ENCODE measurements at regions of chr2 and their contacts with region 1.

Region 1: DNA sequence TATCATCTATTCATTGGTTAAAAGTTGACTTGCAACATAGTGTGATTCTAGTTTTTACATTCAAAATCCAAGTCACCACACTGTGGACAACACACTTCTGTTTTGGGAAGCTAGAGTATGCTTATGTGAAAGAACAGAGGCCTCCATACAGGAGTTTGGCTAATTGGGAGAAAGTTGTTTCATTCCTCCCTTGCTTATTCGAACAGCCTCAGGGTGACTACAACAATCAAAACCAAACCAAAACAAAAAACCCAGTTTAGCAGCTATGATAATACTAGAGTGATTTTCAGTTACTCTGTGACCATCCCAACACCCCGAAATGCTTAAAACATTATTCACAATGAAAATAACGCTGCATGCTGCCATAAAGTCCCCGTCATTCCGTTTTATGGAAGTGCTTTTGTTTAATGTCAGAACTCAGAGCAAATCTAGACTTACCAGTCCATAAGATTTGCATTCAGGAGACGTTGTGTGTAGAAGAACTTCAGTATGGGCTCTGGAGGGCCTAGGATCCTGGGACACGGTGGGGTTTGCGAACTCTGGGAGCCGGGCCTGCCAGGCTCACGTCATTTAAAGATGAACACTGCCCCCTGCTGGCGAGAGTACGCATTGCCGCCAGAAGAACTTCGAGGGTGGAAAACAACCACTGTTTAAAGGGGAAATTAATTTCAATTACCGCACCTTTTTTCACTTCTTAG is 111.4 kb downstream of the FTCDNL1 start:
- DNase-seq: peak; percentile 62
- ATAC-seq: peak; percentile 87
- H3K4me3 ChIP-seq: peak overlapping the region in 2 of 3 experiments; percentile 4 to 25; a peak in 1 of 6 replicates
- H3K27ac ChIP-seq: no peak overlapping the region
- H3K4me1 ChIP-seq: peaks cover 46% of the 10 kb centered on the region
- H3K27me3 ChIP-seq: no peaks in the 10 kb centered on the region; a peak in 2 of 5 replicates
- CTCF ChIP-seq: peak; percentile 95
- EP300 ChIP-seq: no peak
- POLR2A ChIP-seq: no peak
- RAD21 ChIP-seq: peak; percentile 92

Region 2: GRCh38 chr2:198309673-198310280 is 1429.8 kb before region 1 on chr2:
- CTCF ChIA-PET with region 1: interaction called, 4 read pairs
- POLR2A ChIA-PET with region 1: no interaction called
- in situ Hi-C with region 1: loop called (anchors 10 kb)
- intact Hi-C with region 1: loop called (anchors 2 kb)
- DNase-seq: peak; percentile 42
- ATAC-seq: peak; percentile 49; the same call in 2 of the 3 replicates
- H3K4me3 ChIP-seq: no peak overlapping the region
- H3K27ac ChIP-seq: no peak overlapping the region
- H3K4me1 ChIP-seq: peaks cover 16% of the 10 kb centered on the region
- H3K27me3 ChIP-seq: peaks cover 2 to 11% of the 10 kb centered on the region in 2 experiments; a peak in 1 of 5 replicates
- CTCF ChIP-seq: peak; percentile 76
- EP300 ChIP-seq: no peak
- POLR2A ChIP-seq: no peak
- RAD21 ChIP-seq: no peak; the same call in 1 of the 2 replicates

Region 3: GRCh38 chr2:199596549-199596948 is 143.0 kb before region 1 on chr2:
- CTCF ChIA-PET with region 1: no interaction called
- POLR2A ChIA-PET with region 1: no interaction called
- in situ Hi-C with region 1: no loop called
- intact Hi-C with region 1: loop called (anchors 10 kb)
- DNase-seq: peak; percentile 41
- ATAC-seq: peak; percentile 82
- H3K4me3 ChIP-seq: no peak overlapping the region
- H3K27ac ChIP-seq: no peak overlapping the region
- H3K4me1 ChIP-seq: 0 out of 2 replicates have a peak, but pooled peaks cover 6% of the 10 kb centered on the region
- H3K27me3 ChIP-seq: no peaks in the 10 kb centered on the region; a peak in 1 of 5 replicates
- CTCF ChIP-seq: peak; percentile 47
- EP300 ChIP-seq: no peak
- POLR2A ChIP-seq: no peak
- RAD21 ChIP-seq: no peak

Region 4: DNA sequence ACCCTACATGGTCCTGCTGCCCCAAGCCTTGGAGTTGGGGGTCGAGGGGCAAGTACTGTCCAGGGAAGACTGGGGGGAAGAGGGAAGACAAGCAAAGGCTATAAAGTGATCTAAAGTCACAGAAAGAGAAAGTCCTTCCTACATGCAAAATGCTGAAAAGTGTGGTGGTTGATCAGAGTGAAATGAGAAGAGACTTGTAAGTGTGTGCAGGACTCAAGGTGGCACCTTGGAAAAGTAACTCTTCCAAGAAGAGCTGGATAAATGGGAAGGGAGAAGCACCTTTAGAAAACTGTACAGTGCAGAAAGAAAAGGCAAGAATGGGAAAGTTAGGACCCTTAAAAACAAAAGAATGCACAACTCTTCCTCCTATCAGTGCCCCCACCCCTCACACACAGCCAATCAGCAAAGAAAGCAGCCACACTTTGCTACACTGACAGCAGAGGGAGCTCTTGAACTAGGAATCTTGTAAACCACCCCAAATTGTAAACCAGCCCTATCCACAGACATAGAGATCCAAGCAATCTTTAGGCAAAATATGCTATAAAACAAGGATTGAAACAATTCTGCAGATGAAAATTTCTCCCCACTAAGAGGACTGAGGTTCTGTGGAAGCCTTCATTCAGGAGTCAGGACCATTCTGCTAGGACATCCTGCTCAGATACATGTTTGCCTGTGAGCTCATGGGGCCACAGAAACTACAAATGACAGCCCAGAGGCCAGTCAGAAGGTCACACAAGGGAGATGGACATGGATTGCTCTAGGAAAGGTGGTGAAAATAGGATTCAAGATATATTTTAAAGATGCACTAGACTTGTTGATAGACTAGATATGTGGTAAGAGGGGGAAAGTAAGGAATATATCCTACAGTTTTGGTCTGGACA is 35.0 kb before region 1 on chr2:
- CTCF ChIA-PET with region 1: interaction called, 111 read pairs
- POLR2A ChIA-PET with region 1: no interaction called
- in situ Hi-C with region 1: loop called (anchors 5 kb)
- intact Hi-C with region 1: loop called (anchors 1 kb)
- DNase-seq: peak; percentile 53
- ATAC-seq: peak; percentile 99
- H3K4me3 ChIP-seq: no peak overlapping the region
- H3K27ac ChIP-seq: no peak overlapping the region
- H3K4me1 ChIP-seq: no peaks in the 10 kb centered on the region
- H3K27me3 ChIP-seq: no peaks in the 10 kb centered on the region
- CTCF ChIP-seq: peak; percentile 90
- EP300 ChIP-seq: no peak
- POLR2A ChIP-seq: no peak
- RAD21 ChIP-seq: peak; percentile 91

Region 5: DNA sequence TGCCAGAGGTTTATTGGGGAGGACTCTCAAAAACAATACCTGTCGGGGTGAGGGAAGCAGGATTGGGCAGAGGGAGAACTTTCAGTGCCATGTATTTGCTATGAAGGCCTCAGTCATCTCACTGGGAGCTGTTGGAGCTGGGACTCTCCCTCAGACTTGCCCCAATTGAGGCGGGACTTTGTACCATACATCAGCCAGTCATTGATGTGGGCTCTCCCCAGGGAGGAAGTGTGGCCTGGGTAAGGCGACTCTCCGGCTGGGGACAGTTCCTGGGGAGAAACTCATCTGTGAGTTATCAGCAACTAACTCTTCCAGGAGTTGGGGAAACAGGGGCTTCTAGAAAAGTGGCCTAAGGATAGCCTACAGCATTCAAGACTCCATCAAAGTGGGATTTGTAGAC is 45.0 kb after region 1 on chr2:
- CTCF ChIA-PET with region 1: no interaction called
- POLR2A ChIA-PET with region 1: no interaction called
- in situ Hi-C with region 1: no loop called
- intact Hi-C with region 1: loop called (anchors 1 kb)
- DNase-seq: no peak
- ATAC-seq: peak; percentile 39; the same call in 1 of the 3 replicates
- H3K4me3 ChIP-seq: no peak overlapping the region
- H3K27ac ChIP-seq: no peak overlapping the region
- H3K4me1 ChIP-seq: no peaks in the 10 kb centered on the region
- H3K27me3 ChIP-seq: no peaks in the 10 kb centered on the region; a peak in 1 of 5 replicates
- CTCF ChIP-seq: no peak
- EP300 ChIP-seq: no peak
- POLR2A ChIP-seq: no peak
- RAD21 ChIP-seq: no peak

Region 6: DNA sequence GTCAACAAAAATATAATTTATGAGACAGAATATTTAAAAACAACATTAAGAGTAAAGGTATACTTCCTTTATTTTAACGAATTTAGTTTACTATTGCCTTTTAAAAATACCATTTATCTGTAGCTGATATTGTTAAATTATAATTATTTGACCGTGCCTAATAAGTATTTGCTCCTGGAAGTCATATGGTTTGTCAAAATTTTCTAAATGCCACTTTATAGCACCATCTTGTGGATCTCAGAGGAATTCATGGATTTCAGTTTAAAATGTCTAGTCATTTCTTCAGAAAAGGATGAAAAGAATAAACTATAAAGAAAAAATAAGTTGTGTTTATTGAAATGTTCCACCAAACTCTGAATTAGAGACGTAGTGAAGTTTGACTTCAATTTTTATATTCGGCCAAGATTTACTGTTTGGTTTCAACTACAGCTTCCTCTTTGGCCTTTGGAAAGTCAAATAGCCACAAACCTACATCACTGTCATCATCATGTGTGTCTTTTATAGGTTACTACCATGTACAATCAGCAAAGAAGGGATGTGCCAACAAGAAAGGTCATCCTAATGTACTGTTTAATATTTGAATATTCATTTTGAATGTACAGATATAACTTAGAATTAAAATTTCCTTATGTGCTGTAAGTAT is 121.7 kb after region 1 on chr2:
- CTCF ChIA-PET with region 1: interaction called, 5 read pairs
- POLR2A ChIA-PET with region 1: no interaction called
- in situ Hi-C with region 1: no loop called
- intact Hi-C with region 1: loop called (anchors 1 kb)
- DNase-seq: peak; percentile 24
- ATAC-seq: no peak
- H3K4me3 ChIP-seq: no peak overlapping the region
- H3K27ac ChIP-seq: no peak overlapping the region
- H3K4me1 ChIP-seq: no peaks in the 10 kb centered on the region
- H3K27me3 ChIP-seq: peaks cover 0 to 10% of the 10 kb centered on the region in 2 experiments; a peak in 1 of 5 replicates
- CTCF ChIP-seq: peak; percentile 60
- EP300 ChIP-seq: no peak
- POLR2A ChIP-seq: no peak
- RAD21 ChIP-seq: peak; percentile 32; the same call in 1 of the 2 replicates